ENCODE measurements at regions of chr6 and their contacts with region 1.

Region 1: GRCh38 chr6:142746524-142746923 is 198.5 kb downstream of the HIVEP2 start:
- DNase-seq: peak; percentile 56
- ATAC-seq: peak; percentile 96
- H3K4me3 ChIP-seq: no peak overlapping the region
- H3K27ac ChIP-seq: no peak overlapping the region
- H3K4me1 ChIP-seq: no peaks in the 10 kb centered on the region
- H3K27me3 ChIP-seq: peaks cover 0 to 10% of the 10 kb centered on the region in 2 experiments; a peak in 1 of 5 replicates
- CTCF ChIP-seq: peak; percentile 71
- EP300 ChIP-seq: no peak
- POLR2A ChIP-seq: no peak
- RAD21 ChIP-seq: peak; percentile 74; the same call in 1 of the 2 replicates

Region 2: GRCh38 chr6:142845624-142846458 is 99.3 kb after region 1 on chr6:
- CTCF ChIA-PET with region 1: no interaction called
- POLR2A ChIA-PET with region 1: no interaction called
- in situ Hi-C with region 1: no loop called
- intact Hi-C with region 1: loop called (anchors 1 kb)
- DNase-seq: peak; percentile 99
- ATAC-seq: peak; percentile 100
- H3K4me3 ChIP-seq: peak overlapping the region; percentile 50 to 72 (median 71)
- H3K27ac ChIP-seq: peak overlapping the region; percentile 91
- H3K4me1 ChIP-seq: peaks cover 54% of the 10 kb centered on the region
- H3K27me3 ChIP-seq: no peaks in the 10 kb centered on the region
- CTCF ChIP-seq: peak; percentile 79
- EP300 ChIP-seq: peak; percentile 71 to 88; a peak in 3 of 4 replicates
- POLR2A ChIP-seq: peak; percentile 65 to 95
- RAD21 ChIP-seq: peak; percentile 90

Region 3: DNA sequence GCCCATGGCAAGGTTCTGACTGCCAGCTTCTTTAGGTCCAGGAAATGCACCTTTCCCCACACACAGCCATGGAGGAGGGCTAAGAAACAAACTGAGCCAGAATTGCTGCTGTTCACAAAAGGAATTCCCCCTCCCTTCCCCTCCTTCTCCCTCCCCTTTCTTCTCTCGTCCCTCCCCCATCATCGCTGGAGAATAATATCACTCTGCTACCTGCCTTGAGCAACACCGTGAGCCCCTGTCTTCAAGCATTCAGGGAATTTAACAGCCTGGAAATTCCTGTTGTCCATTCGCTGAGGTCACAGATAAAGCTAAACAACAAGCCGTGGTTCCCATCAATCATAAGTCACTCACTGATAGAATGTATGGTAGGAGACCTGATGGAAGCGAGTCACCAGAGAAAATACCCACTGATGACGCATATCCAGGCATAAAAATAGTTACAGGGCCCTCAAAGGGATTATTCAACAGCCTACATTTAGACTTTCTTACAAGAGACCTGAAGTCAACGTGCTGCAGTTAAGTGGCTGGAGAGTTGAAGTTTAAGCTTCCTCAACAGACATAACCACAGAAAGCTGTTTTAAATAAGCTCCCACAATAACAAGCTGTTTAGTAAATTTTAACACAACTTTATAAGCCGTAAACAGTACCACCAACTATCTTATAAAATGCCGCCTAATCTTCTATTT is 138.8 kb after region 1 on chr6:
- CTCF ChIA-PET with region 1: interaction called, 4 read pairs
- POLR2A ChIA-PET with region 1: no interaction called
- in situ Hi-C with region 1: no loop called
- intact Hi-C with region 1: loop called (anchors 1 kb)
- DNase-seq: peak; percentile 84
- ATAC-seq: peak; percentile 60
- H3K4me3 ChIP-seq: no peak overlapping the region
- H3K27ac ChIP-seq: no peak overlapping the region
- H3K4me1 ChIP-seq: peaks cover 27% of the 10 kb centered on the region
- H3K27me3 ChIP-seq: no peaks in the 10 kb centered on the region
- CTCF ChIP-seq: no peak
- EP300 ChIP-seq: no peak
- POLR2A ChIP-seq: no peak
- RAD21 ChIP-seq: no peak

Region 4: GRCh38 chr6:142926494-142927270 is 180.2 kb after region 1 on chr6:
- CTCF ChIA-PET with region 1: no interaction called
- POLR2A ChIA-PET with region 1: no interaction called
- in situ Hi-C with region 1: no loop called
- intact Hi-C with region 1: loop called (anchors 2 kb)
- DNase-seq: peak; percentile 93
- ATAC-seq: peak; percentile 97
- H3K4me3 ChIP-seq: peak overlapping the region; percentile 84 to 99 (median 93)
- H3K27ac ChIP-seq: peak overlapping the region; percentile 99
- H3K4me1 ChIP-seq: peaks cover 38% of the 10 kb centered on the region
- H3K27me3 ChIP-seq: no peaks in the 10 kb centered on the region; a peak in 1 of 5 replicates
- CTCF ChIP-seq: no peak
- EP300 ChIP-seq: peak; percentile 57 to 85; a peak in 3 of 4 replicates
- POLR2A ChIP-seq: peak; percentile 84 to 93; a peak in 3 of 4 replicates
- RAD21 ChIP-seq: peak; percentile 83

Region 5: DNA sequence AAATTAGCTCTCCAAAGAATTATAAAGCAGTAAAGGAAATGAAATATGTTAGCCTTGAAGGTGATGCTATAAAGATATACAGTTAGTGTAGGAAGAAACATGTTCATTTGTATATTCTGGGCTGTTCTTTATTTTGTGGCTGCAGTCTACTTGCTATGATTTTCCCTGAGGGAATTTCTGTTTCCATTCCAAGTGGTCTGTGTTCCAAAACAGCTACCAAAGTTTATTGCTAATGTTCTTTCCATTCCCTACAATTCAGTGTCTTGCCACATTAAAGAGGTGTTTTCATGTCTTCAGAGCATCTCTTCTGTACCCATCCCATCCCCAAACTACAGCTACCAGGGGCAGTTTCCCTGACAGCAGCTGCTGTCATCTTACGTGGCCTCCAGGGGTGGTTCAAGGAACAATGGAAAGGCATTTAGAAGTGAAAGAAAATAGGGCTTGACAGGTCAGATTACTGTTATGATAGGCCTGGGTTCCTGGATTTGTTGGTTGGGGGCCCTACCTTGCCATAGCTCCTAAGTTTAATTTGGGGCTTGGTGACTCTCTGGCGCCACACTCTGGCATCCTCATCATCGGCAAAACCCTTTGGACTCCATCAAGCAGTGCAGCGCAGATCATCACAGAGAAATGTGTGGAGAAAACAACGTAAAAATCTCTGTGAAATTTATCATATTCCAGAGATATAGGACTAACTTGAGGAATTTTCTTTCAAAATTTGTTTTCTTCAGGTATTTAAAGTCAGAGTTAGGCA is 280.3 kb after region 1 on chr6:
- CTCF ChIA-PET with region 1: interaction called, 7 read pairs
- POLR2A ChIA-PET with region 1: no interaction called
- in situ Hi-C with region 1: no loop called
- intact Hi-C with region 1: loop called (anchors 1 kb)
- DNase-seq: peak; percentile 38
- ATAC-seq: peak; percentile 87
- H3K4me3 ChIP-seq: no peak overlapping the region
- H3K27ac ChIP-seq: no peak overlapping the region
- H3K4me1 ChIP-seq: peaks cover 6% of the 10 kb centered on the region; the same call in 1 of the 2 replicates
- H3K27me3 ChIP-seq: no peaks in the 10 kb centered on the region
- CTCF ChIP-seq: peak; percentile 83
- EP300 ChIP-seq: no peak
- POLR2A ChIP-seq: no peak
- RAD21 ChIP-seq: peak; percentile 85